A549 (cell line): ENCODE measurements at regions of chr20 and their contacts with region 1.

Region 1: DNA sequence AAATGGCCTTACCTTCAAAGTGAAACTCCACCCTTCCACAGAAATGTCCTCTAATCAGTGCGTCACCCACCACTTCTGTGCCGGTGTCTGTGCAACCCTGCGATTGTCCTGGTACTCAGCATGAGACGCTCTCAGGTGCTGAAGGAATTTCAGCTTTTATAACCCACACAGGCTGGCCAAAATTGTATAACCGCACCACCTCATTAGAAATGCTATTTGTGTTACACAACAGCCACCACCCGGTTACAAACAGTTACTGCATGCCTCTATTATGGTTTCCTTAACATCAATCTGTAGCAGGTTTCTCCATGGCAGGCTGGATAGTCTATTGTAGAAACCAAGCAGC is 51.5 kb downstream of the SLC23A2 start:
- DNase-seq: peak; percentile 46 to 60
- ATAC-seq: peak; percentile 84 to 86; a peak in 5 of 6 replicates
- H3K4me3 ChIP-seq: no peak overlapping the region
- H3K27ac ChIP-seq: no peak overlapping the region
- H3K4me1 ChIP-seq: peaks cover 31% of the 10 kb centered on the region; the same call in 2 of the 3 replicates
- CTCF ChIP-seq: peak; percentile 64
- EP300 ChIP-seq: no peak
- POLR2A ChIP-seq: no peak
- RAD21 ChIP-seq: peak; percentile 79 to 80

Region 2: DNA sequence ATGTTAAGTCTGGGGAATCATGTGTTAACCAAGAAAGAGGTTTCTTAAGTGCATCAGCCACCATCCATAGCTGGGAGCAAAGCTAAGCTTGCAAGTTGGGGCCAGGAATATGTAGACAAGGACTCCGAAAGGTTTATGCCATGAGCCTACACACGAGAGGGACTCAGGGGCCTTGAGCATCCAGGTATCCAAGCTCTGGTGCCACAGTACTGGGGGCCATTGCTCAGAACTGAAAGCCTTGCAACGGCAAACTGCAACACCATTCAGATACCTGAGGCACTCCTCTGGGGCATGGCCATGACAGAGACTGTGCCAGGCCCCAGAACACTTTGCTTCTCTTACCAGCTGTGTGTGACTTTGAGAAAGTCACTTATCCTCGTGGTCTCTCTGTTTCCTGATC is 200.5 kb before region 1 on chr20:
- CTCF ChIA-PET with region 1: interaction called, 10 read pairs
- POLR2A ChIA-PET with region 1: no interaction called
- DNase-seq: no peak
- ATAC-seq: no peak
- H3K4me3 ChIP-seq: no peak overlapping the region
- H3K27ac ChIP-seq: no peak overlapping the region
- H3K4me1 ChIP-seq: no peaks in the 10 kb centered on the region
- CTCF ChIP-seq: no peak
- EP300 ChIP-seq: no peak
- POLR2A ChIP-seq: no peak
- RAD21 ChIP-seq: no peak

Region 3: GRCh38 chr20:4906897-4907296 is 42.9 kb before region 1 on chr20:
- CTCF ChIA-PET with region 1: interaction called, 13 read pairs
- POLR2A ChIA-PET with region 1: no interaction called
- DNase-seq: no peak
- ATAC-seq: no peak
- H3K4me3 ChIP-seq: no peak overlapping the region
- H3K27ac ChIP-seq: no peak overlapping the region
- H3K4me1 ChIP-seq: 0 out of 3 replicates have a peak, but pooled peaks cover 3% of the 10 kb centered on the region
- CTCF ChIP-seq: no peak
- EP300 ChIP-seq: no peak
- POLR2A ChIP-seq: no peak
- RAD21 ChIP-seq: no peak

Region 4: GRCh38 chr20:4916971-4917881 is 32.6 kb before region 1 on chr20:
- CTCF ChIA-PET with region 1: interaction called, 12 read pairs
- POLR2A ChIA-PET with region 1: interaction called, 3 read pairs
- DNase-seq: peak in 1 of 2 experiments; percentile 58
- ATAC-seq: peak; percentile 65 to 86; a peak in 4 of 6 replicates
- H3K4me3 ChIP-seq: no peak overlapping the region
- H3K27ac ChIP-seq: peak overlapping the region in 1 of 2 experiments; percentile 6; a peak in 2 of 6 replicates
- H3K4me1 ChIP-seq: peaks cover 15% of the 10 kb centered on the region
- CTCF ChIP-seq: no peak
- EP300 ChIP-seq: no peak
- POLR2A ChIP-seq: peak; percentile 20; the same call in 1 of the 2 replicates
- RAD21 ChIP-seq: no peak

Region 5: GRCh38 chr20:4932061-4932460 is 17.7 kb before region 1 on chr20:
- CTCF ChIA-PET with region 1: interaction called, 15 read pairs
- POLR2A ChIA-PET with region 1: interaction called, 4 read pairs
- DNase-seq: no peak
- ATAC-seq: no peak
- H3K4me3 ChIP-seq: no peak overlapping the region
- H3K27ac ChIP-seq: no peak overlapping the region
- H3K4me1 ChIP-seq: no peaks in the 10 kb centered on the region
- CTCF ChIP-seq: no peak
- EP300 ChIP-seq: no peak
- POLR2A ChIP-seq: no peak
- RAD21 ChIP-seq: no peak